Activated B cell treated with CpG ODN at 0.5 μM for 24 hours (primary cell): ENCODE measurements at regions of chr10 and their contacts with region 1.

Region 1: DNA sequence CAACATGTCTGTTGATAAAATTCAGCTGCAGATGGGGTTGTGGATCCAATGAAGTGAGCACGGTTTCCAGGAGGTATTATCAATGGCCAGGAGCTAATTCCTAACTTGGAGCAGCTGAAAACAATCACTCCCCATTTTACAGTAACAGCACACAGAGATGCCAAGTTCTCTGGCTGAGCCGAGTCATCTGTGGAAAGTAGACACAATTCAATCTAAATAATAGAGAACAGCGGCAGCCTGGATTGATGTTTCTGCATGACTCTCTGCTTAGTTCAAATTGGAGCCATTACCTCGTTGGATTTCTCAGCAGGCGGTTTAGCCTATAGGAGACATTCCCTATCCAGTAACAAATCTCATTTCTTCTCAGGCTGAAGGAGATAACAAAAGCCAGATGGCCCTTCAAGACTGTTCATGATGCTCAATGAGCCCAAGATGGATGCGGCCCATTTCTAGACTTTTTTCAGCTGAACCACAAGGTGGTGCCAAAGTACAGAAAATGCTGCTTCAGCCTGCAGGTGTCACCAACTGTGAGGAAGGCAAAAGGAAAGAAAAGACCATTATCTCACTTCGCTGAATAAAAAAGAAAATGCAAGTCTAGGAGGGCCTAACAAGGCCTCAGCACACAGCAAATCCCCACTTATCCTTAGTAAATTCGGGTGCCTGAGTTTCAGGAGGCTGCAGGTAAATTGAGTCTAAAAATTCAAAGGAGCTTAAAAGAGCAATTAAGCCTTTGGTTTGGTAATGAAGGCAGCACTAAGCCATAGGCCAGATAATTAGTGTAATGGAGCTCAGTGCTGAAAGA is 83.7 kb downstream of the SLC16A9 start:
- DNase-seq: no peak
- ATAC-seq: peak; percentile 85
- H3K4me3 Mint-ChIP-seq: no peak overlapping the region
- H3K27ac Mint-ChIP-seq: no peak overlapping the region
- H3K4me1 Mint-ChIP-seq: peaks cover 3% of the 10 kb centered on the region
- H3K27me3 Mint-ChIP-seq: no peaks in the 10 kb centered on the region
- CTCF ChIP-seq: peak; percentile 42

Region 2: GRCh38 chr10:59741048-59741447 is 115.1 kb after region 1 on chr10:
- CTCF ChIA-PET with region 1: no interaction called
- POLR2A ChIA-PET with region 1: no interaction called
- intact Hi-C with region 1: no loop called
- DNase-seq: no peak
- ATAC-seq: no peak
- H3K4me3 Mint-ChIP-seq: no peak overlapping the region
- H3K27ac Mint-ChIP-seq: no peak overlapping the region
- H3K4me1 Mint-ChIP-seq: no peaks in the 10 kb centered on the region
- H3K27me3 Mint-ChIP-seq: peaks cover 7% of the 10 kb centered on the region
- CTCF ChIP-seq: no peak

Region 3: GRCh38 chr10:59808896-59809643 is 183.1 kb after region 1 on chr10:
- CTCF ChIA-PET with region 1: interaction called, 40 read pairs
- POLR2A ChIA-PET with region 1: no interaction called
- intact Hi-C with region 1: loop called (anchors 1 kb)
- DNase-seq: peak; percentile 41
- ATAC-seq: peak; percentile 92
- H3K4me3 Mint-ChIP-seq: no peak overlapping the region
- H3K27ac Mint-ChIP-seq: no peak overlapping the region
- H3K4me1 Mint-ChIP-seq: peaks cover 17% of the 10 kb centered on the region
- H3K27me3 Mint-ChIP-seq: no peaks in the 10 kb centered on the region
- CTCF ChIP-seq: no peak

Region 4: GRCh38 chr10:59830601-59831259 is 204.8 kb after region 1 on chr10:
- CTCF ChIA-PET with region 1: interaction called, 19 read pairs
- POLR2A ChIA-PET with region 1: no interaction called
- intact Hi-C with region 1: loop called (anchors 1 kb)
- DNase-seq: no peak
- ATAC-seq: peak; percentile 50
- H3K4me3 Mint-ChIP-seq: no peak overlapping the region
- H3K27ac Mint-ChIP-seq: no peak overlapping the region
- H3K4me1 Mint-ChIP-seq: peaks cover 69% of the 10 kb centered on the region
- H3K27me3 Mint-ChIP-seq: no peaks in the 10 kb centered on the region
- CTCF ChIP-seq: peak; percentile 21

Region 5: GRCh38 chr10:59970396-59971368 is 344.8 kb after region 1 on chr10:
- CTCF ChIA-PET with region 1: no interaction called
- POLR2A ChIA-PET with region 1: no interaction called
- intact Hi-C with region 1: loop called (anchors 2 kb)
- DNase-seq: no peak
- ATAC-seq: peak; percentile 83
- H3K4me3 Mint-ChIP-seq: no peak overlapping the region
- H3K27ac Mint-ChIP-seq: no peak overlapping the region
- H3K4me1 Mint-ChIP-seq: peaks cover 5% of the 10 kb centered on the region
- H3K27me3 Mint-ChIP-seq: no peaks in the 10 kb centered on the region
- CTCF ChIP-seq: no peak

Region 6: GRCh38 chr10:60032723-60033122 is 406.8 kb after region 1 on chr10:
- CTCF ChIA-PET with region 1: interaction called, 11 read pairs
- POLR2A ChIA-PET with region 1: no interaction called
- intact Hi-C with region 1: loop called (anchors 1 kb)
- DNase-seq: no peak
- ATAC-seq: no peak
- H3K4me3 Mint-ChIP-seq: no peak overlapping the region
- H3K27ac Mint-ChIP-seq: no peak overlapping the region
- H3K4me1 Mint-ChIP-seq: peaks cover 14% of the 10 kb centered on the region
- H3K27me3 Mint-ChIP-seq: no peaks in the 10 kb centered on the region
- CTCF ChIP-seq: no peak

Region 7: DNA sequence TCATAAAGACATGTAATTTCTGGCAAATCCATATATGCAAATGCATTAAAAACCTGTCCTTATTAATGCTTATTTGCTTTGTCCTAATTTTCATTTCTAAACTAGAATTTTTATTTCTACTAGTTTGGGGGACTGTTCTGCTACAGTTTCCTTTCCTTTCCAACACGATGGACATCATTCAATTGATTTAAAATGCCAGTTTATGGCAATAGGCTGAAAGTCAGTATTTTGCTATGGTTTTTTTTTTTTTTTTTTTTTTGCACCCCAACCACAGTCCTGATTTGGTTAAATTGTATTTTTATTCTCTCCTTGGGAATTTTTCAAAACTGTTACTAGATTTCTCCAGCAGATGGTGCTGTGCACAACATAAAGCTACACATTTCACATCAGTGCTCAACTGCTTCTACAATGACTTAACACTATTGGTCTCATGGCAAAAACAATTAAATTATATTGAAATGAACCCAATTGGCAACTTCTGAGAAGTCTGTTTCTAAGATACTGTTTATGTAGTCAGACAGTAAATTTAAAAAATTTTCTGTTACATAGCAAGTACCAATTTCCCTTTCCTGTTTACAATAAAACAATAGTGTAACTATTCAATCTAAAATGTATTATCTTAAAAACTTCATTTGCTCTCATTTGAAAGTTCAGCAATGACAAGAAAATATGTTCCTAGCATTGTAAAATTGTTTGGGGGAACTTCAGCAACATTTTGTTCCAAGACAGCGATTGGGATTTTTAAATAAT is 474.3 kb after region 1 on chr10:
- CTCF ChIA-PET with region 1: no interaction called
- POLR2A ChIA-PET with region 1: no interaction called
- intact Hi-C with region 1: loop called (anchors 2 kb)
- DNase-seq: no peak
- ATAC-seq: no peak
- H3K4me3 Mint-ChIP-seq: no peak overlapping the region
- H3K27ac Mint-ChIP-seq: no peak overlapping the region
- H3K4me1 Mint-ChIP-seq: no peaks in the 10 kb centered on the region
- H3K27me3 Mint-ChIP-seq: no peaks in the 10 kb centered on the region
- CTCF ChIP-seq: peak; percentile 70

Region 8: DNA sequence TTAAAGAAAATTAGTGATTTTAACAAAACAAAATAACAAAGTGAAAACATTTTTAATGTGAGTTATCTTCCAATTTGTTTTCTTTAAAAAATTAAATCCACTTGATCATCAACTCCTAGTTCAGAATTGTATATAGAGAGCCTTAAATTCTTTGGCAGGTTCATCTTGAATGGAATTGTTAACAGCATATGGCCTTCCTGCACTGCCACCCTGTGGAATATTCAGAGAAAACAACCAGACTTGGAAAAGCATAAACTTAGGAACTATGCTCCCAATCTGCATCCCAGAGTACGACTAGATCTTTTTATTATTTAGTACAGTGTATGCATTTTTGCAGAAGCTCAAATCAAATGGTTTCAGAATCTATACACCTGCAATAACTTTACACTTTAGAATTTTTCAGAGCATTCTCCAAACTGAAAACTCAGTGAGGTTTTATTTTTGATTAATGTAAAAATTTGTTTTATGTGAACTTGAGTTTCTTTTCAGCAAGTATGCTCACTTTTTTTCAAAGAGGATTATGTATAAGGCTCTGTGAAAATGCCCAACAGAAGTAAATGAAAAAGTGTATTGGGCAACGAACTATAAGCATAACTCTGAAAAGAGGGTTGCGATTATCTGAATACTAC is 808.6 kb after region 1 on chr10:
- CTCF ChIA-PET with region 1: no interaction called
- POLR2A ChIA-PET with region 1: no interaction called
- intact Hi-C with region 1: loop called (anchors 1 kb)
- DNase-seq: no peak
- ATAC-seq: no peak
- H3K4me3 Mint-ChIP-seq: no peak overlapping the region
- H3K27ac Mint-ChIP-seq: no peak overlapping the region
- H3K4me1 Mint-ChIP-seq: peaks cover 5% of the 10 kb centered on the region
- H3K27me3 Mint-ChIP-seq: no peaks in the 10 kb centered on the region
- CTCF ChIP-seq: peak; percentile 49